ENCODE measurements at regions of chr22 and their contacts with region 1.

Region 1: GRCh38 chr22:50276143-50276542 is 6.0 kb upstream of the MAPK11 start:
- H3K4me3 ChIP-seq: no peak overlapping the region
- H3K27ac ChIP-seq: no peak overlapping the region
- H3K4me1 ChIP-seq: peaks cover 6% of the 10 kb centered on the region
- CTCF ChIP-seq: no peak

Region 2: DNA sequence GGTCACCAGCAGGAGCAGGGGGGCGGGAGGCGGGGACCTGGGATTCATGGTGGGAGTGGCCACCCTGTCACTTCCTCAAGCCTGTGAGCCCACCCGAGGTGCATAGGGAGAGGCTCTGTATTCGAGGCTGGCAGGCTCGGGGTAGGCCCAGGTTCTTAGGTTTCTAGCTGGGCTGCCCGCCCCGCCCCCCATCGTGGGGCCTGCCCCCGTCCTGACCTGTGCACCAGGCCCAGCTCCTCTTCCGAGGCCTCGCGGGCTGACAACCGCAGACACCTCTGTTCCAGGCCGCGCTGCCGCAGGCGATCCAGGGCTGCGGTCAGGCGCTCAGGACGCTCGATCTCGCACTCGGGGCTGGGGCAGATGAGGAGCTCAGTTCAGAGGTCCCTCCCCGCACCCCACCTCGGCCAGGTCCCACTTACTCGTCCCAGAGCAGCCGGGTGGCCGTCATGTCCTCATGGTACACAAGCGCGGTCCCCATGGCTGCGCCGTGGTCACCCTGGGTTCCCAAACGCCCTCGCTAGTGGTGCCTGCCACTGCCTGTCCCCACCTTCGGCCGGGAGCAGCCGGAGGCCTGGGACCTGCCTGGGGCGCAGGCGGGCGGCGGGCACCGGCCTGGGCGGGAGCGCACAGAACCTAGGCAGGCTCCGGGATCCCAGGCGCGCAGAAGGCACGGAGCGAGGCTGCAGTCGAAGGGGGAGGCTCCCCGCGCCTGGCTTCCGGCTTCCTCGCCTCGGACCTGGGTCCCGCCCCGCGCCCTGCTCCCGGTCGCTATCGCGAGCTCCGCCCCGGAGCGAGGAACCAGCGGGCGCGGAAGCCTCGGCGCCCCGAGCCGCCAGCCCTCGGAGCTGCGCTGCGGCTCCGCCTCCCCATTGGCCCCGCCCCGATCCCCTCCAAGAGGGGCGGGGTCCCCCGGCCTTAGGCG is 25.3 kb before region 1 on chr22 and contains the start of gene HDAC10:
- CTCF ChIA-PET with region 1: interaction called, 12 read pairs
- POLR2A ChIA-PET with region 1: interaction called, 17 read pairs
- H3K4me3 ChIP-seq: peak within 1 kb of the TSS; percentile 55
- H3K27ac ChIP-seq: peak within 1 kb of the TSS; percentile 86
- H3K4me1 ChIP-seq: peaks cover 12% of the 10 kb centered on the region
- CTCF ChIP-seq: no peak

Region 3: DNA sequence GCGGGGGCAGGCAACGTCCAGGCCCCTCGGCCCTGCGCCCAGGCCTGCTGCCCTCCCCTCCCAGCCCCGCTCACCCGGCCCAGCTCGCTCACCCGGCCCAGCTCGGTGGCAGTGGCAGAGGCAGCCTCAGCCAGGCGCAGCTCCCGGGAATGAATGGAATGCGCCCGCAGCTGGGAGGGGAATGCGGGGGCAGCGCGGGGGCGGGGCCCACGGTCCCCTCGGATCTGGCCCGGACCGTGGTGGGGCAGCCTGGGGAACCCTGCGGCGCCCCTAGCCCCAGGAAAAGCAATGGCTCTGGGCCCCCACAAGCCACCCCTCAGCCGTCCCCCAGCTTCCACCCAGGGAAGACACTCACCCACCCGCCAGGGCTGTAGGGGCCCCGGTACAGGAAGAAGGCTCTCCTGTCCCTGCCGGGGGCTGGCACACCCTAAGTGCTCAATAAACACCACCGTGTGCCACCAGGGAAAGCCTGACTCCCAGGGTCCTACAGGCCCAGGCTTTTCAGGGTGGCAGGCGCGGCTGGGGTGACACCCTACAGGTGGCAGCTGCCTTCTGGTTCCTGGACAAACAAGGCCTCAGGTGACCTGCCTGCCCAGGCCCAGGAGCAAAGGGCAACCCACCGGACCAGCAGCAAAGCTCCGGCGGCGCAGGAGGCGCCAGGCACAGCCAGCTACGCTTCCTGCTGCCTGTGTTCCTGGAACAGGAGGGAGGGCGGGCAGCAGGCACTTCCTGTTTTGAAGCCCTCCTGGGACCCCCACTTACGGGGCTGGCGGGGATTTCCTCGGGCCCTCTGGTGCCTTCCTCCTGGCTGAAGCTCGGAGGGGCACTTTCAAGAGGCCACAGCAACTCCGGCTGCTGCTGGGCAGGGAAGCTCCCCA is 17.5 kb after region 1 on chr22:
- CTCF ChIA-PET with region 1: interaction called, 14 read pairs
- POLR2A ChIA-PET with region 1: interaction called, 3 read pairs
- H3K4me3 ChIP-seq: no peak overlapping the region
- H3K27ac ChIP-seq: no peak overlapping the region
- H3K4me1 ChIP-seq: no peaks in the 10 kb centered on the region
- CTCF ChIP-seq: no peak

Region 4: GRCh38 chr22:50326959-50327710 is 51.0 kb after region 1 on chr22 and contains the start of gene DENND6B:
- CTCF ChIA-PET with region 1: interaction called, 12 read pairs
- POLR2A ChIA-PET with region 1: interaction called, 9 read pairs
- H3K4me3 ChIP-seq: peak within 1 kb of the TSS; percentile 66
- H3K27ac ChIP-seq: peak within 1 kb of the TSS; percentile 85
- H3K4me1 ChIP-seq: no peaks in the 10 kb centered on the region
- CTCF ChIP-seq: no peak